Dorsolateral prefrontal cortex (tissue), 120 donors: ENCODE measurements at regions of chr12 and their contacts with region 1.

Region 1: GRCh38 chr12:77010691-77011548 is 54.4 kb downstream of the E2F7 start:
- DNase-seq: peak; percentile 54 to 86 (median 78)
- H3K4me3 ChIP-seq: peak overlapping the region in 48 of 59 donors; percentile 4 to 58 (median 38)
- H3K27ac ChIP-seq: peak overlapping the region in 14 of 59 donors; percentile 5 to 54 (median 38)
- H3K27me3 ChIP-seq: peaks cover 0 to 3% (median 0%) of the 10 kb centered on the region in 45 donors
- CTCF ChIP-seq: peak; percentile 62 to 97 (median 89)

Region 2: DNA sequence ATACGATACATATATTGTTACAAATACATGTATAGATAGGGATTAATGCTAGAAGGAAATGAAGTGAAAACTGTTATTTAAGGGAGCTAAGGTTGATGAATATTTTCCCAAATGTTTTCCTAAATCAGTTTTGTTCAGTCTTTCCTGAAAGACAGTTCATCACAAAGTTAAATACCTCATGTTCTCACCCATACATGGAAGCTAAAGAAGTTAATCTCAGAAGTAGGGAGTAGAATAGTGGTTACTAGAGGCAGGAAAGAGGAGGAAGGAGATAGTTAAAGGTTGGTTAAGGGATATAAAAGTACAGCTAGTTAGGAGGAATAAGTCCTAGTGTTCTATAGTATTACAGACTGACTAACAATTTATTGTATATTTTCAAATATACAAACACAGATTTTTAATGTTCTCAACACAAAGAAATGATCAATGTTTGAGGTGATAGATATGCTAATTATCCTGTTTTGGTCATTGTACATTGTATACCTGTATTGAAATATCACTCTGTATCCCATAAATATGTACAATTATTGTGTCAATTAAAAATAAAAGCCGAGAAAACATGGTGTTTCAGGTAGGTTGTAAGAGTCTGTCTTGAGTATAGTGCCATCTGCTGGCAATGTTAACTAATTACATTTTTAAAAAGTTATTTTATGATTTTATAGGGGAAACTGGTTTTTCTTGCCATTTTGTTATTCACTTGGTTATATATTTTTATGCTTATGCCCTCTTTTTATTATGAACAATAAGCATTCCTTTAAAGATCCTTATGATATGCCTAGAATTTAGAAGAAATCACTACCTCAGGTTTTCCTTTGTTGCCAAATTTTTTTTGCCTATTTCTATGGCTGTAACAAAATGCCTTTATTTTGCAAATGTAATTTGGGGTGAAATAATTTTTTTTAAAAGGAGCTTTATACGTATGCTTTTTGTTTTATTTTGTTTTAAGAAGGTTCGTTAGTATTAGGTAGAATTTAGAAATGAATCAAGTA is 220.1 kb before region 1 on chr12:
- intact Hi-C with region 1: loop called in 1 of 2 experiments (anchors 5 kb)
- DNase-seq: no peak
- H3K4me3 ChIP-seq: no peak overlapping the region
- H3K27ac ChIP-seq: peak overlapping the region in 2 of 59 donors; percentile 8 to 30
- H3K27me3 ChIP-seq: no peaks in the 10 kb centered on the region
- CTCF ChIP-seq: peak; percentile 56 to 94 (median 79)

Region 3: GRCh38 chr12:77087427-77087826 is 76.5 kb after region 1 on chr12:
- intact Hi-C with region 1: no loop called
- DNase-seq: peak in 1 of 10 donors; percentile 3
- H3K4me3 ChIP-seq: no peak overlapping the region
- H3K27ac ChIP-seq: no peak overlapping the region
- H3K27me3 ChIP-seq: no peaks in the 10 kb centered on the region
- CTCF ChIP-seq: no peak

Region 4: DNA sequence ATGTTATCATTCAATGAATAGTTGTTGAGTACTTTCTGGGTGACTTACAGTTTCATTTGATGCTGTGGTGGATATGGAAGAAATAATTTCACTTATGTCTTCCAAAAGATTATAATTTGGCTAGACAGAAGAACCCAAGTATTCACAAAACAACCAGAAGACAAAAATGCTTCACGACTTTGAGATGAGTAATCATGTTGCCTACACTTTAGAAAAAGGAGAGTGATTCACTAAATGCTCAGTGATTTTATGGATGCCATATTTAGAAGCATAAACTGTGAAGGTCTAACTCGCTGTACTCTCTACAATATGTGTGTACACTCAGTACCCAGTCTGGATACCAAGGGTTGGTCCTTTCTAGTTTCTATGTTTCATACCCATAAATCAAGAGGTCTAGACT is 155.8 kb after region 1 on chr12:
- intact Hi-C with region 1: no loop called
- DNase-seq: no peak
- H3K4me3 ChIP-seq: no peak overlapping the region
- H3K27ac ChIP-seq: peak overlapping the region in 7 of 59 donors; percentile 7 to 82 (median 52)
- H3K27me3 ChIP-seq: no peaks in the 10 kb centered on the region
- CTCF ChIP-seq: no peak